Activated naive CD4-positive, alpha-beta T cell treated with anti-CD3 and anti-CD28 coated beads for 36 hours (primary cell): ENCODE measurements at regions of chrX and their contacts with region 1.

Region 1: GRCh38 chrX:132488819-132489577 is at the start of gene MBNL3:
- DNase-seq: peak; percentile 63
- H3K4me3 Mint-ChIP-seq: peak within 1 kb of the TSS; percentile 95
- H3K27ac Mint-ChIP-seq: peak within 1 kb of the TSS; percentile 96
- H3K4me1 Mint-ChIP-seq: peaks cover 33% of the 10 kb centered on the region
- H3K27me3 Mint-ChIP-seq: no peaks in the 10 kb centered on the region
- total RNA-seq, gene MBNL3: 14.2 to 15.8 TPM

Region 2: DNA sequence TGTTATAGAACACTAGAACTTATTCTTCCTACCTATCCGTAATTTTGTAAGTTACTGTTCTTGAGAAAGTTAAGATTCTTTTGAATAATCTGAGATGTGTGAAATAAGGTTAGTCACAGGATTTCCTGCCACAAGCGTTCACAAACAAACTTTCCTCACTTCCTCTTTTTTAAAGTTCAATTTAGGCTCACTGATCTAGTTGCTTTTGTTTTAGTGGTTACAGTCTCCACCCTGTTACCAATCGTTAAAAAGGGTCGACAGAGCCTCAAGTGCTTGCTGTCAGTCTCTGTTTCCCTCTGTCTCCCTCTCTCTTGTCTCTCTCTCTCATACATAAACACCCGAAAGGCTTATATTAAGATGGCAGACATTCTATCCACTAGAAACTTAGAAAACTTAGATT is 501.7 kb before region 1 on chrX:
- CTCF ChIA-PET with region 1: no interaction called
- intact Hi-C with region 1: loop called (anchors 2 kb)
- DNase-seq: peak; percentile 28
- H3K4me3 Mint-ChIP-seq: peak overlapping the region; percentile 20
- H3K27ac Mint-ChIP-seq: peak overlapping the region; percentile 94
- H3K4me1 Mint-ChIP-seq: peaks cover 48% of the 10 kb centered on the region
- H3K27me3 Mint-ChIP-seq: no peaks in the 10 kb centered on the region

Region 3: DNA sequence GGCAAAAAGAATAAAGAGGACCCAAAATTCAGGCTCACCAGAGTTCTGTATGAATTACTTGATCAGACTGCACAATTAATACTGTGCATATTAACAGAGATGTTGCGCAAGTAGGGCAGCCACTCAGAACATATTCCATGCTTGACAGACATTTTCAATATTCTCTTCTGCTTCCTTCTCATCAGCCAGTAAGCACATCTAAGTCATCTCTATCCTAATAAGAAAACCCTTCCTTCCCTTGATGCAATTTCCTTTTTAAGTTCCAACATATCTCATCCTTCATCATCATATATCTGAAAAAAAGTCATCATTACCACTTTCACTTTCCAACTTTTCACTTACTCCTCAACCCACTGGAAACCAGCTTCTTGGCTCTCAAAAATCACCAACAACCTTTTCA is 14.5 kb before region 1 on chrX:
- CTCF ChIA-PET with region 1: no interaction called
- intact Hi-C with region 1: loop called (anchors 2 kb)
- DNase-seq: no peak
- H3K4me3 Mint-ChIP-seq: peak overlapping the region; percentile 52
- H3K27ac Mint-ChIP-seq: peak overlapping the region; percentile 14
- H3K4me1 Mint-ChIP-seq: peaks cover 22% of the 10 kb centered on the region
- H3K27me3 Mint-ChIP-seq: no peaks in the 10 kb centered on the region

Region 4: DNA sequence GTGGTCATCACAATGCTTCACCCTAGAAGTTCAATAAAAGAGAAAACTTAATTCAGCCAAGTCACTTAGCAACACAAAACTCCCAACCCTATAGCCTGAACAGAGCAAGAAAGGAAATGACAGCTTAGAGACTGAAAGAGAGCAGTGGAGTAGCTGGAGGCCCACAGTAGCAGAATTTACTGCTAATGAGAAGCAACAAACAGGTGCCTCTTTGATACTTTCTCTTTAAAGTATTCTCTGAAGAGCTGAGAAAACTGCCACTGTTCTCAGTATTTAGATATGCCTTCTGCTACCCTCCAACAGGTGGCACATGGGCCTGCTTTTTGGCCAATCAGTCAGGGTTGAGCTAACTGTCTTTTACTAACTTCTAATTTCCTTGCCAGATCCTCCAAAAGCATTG is 1256.4 kb after region 1 on chrX:
- CTCF ChIA-PET with region 1: no interaction called
- intact Hi-C with region 1: loop called (anchors 5 kb)
- DNase-seq: peak; percentile 37
- H3K4me3 Mint-ChIP-seq: no peak overlapping the region
- H3K27ac Mint-ChIP-seq: no peak overlapping the region
- H3K4me1 Mint-ChIP-seq: peaks cover 54% of the 10 kb centered on the region
- H3K27me3 Mint-ChIP-seq: no peaks in the 10 kb centered on the region